H1 (cell line): ENCODE measurements at regions of chr2 and their contacts with region 1.

Region 1: DNA sequence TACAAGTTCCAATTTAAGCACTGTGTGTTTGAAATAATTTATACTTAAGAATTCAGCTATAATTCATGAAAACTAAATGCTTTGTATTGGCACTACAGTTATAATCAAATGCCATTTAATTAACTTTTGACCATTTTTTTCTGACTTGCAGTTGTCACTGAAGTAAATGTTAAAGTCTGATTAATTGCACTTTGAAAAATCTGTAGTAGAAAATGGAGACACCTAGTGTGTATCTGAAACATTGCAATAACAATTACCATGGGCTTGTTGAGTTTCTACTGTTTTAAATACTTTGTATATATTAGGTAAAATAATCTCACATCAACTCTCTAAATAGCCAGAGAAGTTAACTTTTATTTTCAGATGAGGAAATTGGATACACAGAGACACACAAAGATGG is 458.6 kb upstream of the FSIP2 start:
- DNase-seq: no peak
- H3K4me3 ChIP-seq: no peak overlapping the region
- H3K27ac ChIP-seq: no peak overlapping the region
- H3K4me1 ChIP-seq: no peaks in the 10 kb centered on the region
- H3K27me3 ChIP-seq: no peaks in the 10 kb centered on the region
- CTCF ChIP-seq: peak in 2 of 3 experiments; percentile 18 to 31; a peak in 2 of 4 replicates
- EP300 ChIP-seq: no peak
- POLR2A ChIP-seq: no peak
- RAD21 ChIP-seq: peak in 1 of 2 experiments; percentile 53; a peak in 3 of 4 replicates

Region 2: GRCh38 chr2:185291035-185291647 is 11.1 kb after region 1 on chr2:
- CTCF ChIA-PET with region 1: interaction called, 44 read pairs
- POLR2A ChIA-PET with region 1: no interaction called
- DNase-seq: peak; percentile 54 to 74
- H3K4me3 ChIP-seq: no peak overlapping the region
- H3K27ac ChIP-seq: no peak overlapping the region
- H3K4me1 ChIP-seq: peaks cover 0 to 4% (median under 1%) of the 10 kb centered on the region in 4 experiments; a peak in 2 of 7 replicates
- H3K27me3 ChIP-seq: no peaks in the 10 kb centered on the region
- CTCF ChIP-seq: peak; percentile 82 to 89 (median 86)
- EP300 ChIP-seq: no peak
- POLR2A ChIP-seq: no peak
- RAD21 ChIP-seq: peak; percentile 94 to 96